Mammary epithelial cell (primary cell): ENCODE measurements at regions of chr19 and their contacts with region 1.

Region 1: GRCh38 chr19:34639491-34640085 is 37.4 kb downstream of the SCGB2B2 start:
- DNase-seq: peak; percentile 35
- H3K4me3 ChIP-seq: no peak overlapping the region
- H3K27ac ChIP-seq: no peak overlapping the region
- H3K4me1 ChIP-seq: no peaks in the 10 kb centered on the region
- H3K27me3 ChIP-seq: no peaks in the 10 kb centered on the region
- CTCF ChIP-seq: peak; percentile 80 to 81

Region 2: GRCh38 chr19:34501339-34502320 is 138.0 kb before region 1 on chr19:
- CTCF ChIA-PET with region 1: no interaction called
- dilution Hi-C with region 1: no loop called
- in situ Hi-C with region 1: no loop called
- intact Hi-C with region 1: loop called (anchors 5 kb)
- DNase-seq: peak; percentile 81
- H3K4me3 ChIP-seq: no peak overlapping the region
- H3K27ac ChIP-seq: no peak overlapping the region
- H3K4me1 ChIP-seq: peaks cover 3% of the 10 kb centered on the region
- H3K27me3 ChIP-seq: no peaks in the 10 kb centered on the region
- CTCF ChIP-seq: peak; percentile 92 to 100

Region 3: DNA sequence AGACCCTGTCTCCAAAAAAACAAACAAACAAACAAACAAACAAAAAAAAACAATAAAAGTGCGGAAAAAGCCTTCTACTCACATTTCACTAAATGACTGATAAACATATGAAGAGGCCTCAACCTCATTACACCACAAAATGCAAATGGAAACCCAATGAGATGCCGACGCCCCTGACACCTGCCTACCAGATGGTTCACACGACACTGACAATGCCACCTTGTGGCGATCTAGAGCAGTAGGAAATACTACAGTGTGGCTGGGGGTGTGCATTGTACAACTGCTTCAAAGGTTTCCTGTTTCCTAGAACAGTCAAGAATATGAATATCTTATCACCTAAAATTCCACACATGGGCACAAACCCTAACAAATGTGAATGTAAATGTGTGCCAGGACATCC is 23.3 kb after region 1 on chr19:
- CTCF ChIA-PET with region 1: no interaction called
- dilution Hi-C with region 1: no loop called
- in situ Hi-C with region 1: no loop called
- intact Hi-C with region 1: loop called (anchors 2 kb)
- DNase-seq: peak; percentile 14
- H3K4me3 ChIP-seq: no peak overlapping the region
- H3K27ac ChIP-seq: no peak overlapping the region
- H3K4me1 ChIP-seq: no peaks in the 10 kb centered on the region
- H3K27me3 ChIP-seq: no peaks in the 10 kb centered on the region
- CTCF ChIP-seq: peak; percentile 24 to 51

Region 4: DNA sequence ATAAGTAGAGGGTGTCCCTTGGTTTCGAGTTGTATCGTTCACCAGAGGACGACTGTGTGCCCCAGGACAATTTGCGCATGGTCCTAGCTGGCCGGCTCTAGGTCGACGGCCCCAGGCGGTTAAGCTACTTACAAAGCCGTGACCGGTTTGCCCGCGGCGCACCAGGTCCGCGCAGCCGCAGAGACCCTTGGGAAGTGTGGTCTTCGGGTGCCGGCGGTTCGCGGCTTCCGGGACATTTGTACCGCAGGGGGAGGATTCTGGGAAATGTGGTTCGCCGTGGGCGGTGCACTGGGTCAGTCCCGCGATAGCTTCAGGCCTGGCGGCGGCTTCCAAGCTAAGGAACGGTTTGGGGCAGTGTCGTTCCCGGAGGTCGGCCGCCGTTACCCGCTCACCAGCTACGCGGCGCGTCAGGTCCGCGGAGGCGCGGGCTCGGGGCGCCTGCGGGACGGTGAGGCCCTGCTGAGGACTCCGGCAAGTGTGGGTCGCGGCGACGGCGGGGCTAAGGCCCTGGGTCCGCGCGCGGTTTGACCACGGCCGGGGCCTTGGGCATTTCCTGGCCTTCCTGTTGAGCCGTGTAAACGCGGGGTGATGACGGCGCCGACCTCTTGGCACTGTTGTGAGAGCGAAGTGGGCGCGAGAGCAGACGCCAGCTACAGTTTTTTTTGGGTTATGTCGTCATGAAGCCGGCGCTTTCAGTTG is 37.9 kb after region 1 on chr19 and contains the start of gene ZNF302:
- CTCF ChIA-PET with region 1: no interaction called
- dilution Hi-C with region 1: no loop called
- in situ Hi-C with region 1: no loop called
- intact Hi-C with region 1: no loop called
- DNase-seq: peak; percentile 94
- H3K4me3 ChIP-seq: peak within 1 kb of the TSS; percentile 71 to 95 (median 86)
- H3K27ac ChIP-seq: peak within 1 kb of the TSS; percentile 84
- H3K4me1 ChIP-seq: peaks cover 5% of the 10 kb centered on the region
- H3K27me3 ChIP-seq: no peaks in the 10 kb centered on the region
- CTCF ChIP-seq: no peak
- total RNA-seq, gene ZNF302: 12.1 to 13.8 TPM